BJ (cell line): ENCODE measurements at regions of chr19 and their contacts with region 1.

Region 1: DNA sequence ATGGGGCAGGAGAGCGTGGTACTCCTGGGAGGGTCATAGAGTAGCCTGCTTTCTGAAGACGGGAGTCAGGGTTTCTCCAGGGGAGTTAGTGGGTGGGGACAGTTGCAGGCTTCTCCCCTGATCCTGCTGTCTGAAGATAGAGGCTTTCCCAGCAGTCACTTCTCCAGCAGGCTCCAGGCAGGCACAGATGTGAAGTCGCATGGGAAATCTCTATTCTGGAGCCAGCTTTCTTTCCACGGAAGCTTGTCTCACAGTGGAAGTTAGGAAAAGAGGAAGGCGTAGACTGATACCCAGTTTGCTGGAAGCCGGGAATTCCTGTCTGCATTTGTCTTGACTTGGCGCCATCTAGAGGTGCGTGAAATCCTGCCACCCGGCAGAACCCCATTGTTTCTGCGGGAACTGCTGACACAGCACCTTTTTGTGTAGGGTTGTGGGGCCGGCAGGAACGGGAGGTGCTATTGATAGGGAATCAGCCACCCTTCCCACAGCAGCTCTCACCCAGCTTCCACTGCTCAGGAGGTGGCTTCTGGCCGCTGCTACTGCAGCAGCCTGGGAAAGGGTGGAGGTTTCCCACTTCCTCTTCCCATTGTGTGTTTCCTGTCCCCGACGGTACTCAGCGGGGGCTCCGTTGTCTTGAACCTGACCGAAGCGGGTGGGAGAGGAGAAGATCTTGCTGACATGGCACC is 28.5 kb upstream of the NPAS1 start:
- DNase-seq: no peak
- H3K4me3 ChIP-seq: no peak overlapping the region
- H3K27me3 ChIP-seq: no peaks in the 10 kb centered on the region
- CTCF ChIP-seq: peak; percentile 86

Region 2: GRCh38 chr19:46753420-46754155 is 237.5 kb before region 1 on chr19:
- CTCF ChIA-PET with region 1: interaction called, 12 read pairs
- POLR2A ChIA-PET with region 1: no interaction called
- DNase-seq: no peak
- H3K4me3 ChIP-seq: no peak overlapping the region
- H3K27me3 ChIP-seq: no peaks in the 10 kb centered on the region
- CTCF ChIP-seq: peak; percentile 57

Region 3: DNA sequence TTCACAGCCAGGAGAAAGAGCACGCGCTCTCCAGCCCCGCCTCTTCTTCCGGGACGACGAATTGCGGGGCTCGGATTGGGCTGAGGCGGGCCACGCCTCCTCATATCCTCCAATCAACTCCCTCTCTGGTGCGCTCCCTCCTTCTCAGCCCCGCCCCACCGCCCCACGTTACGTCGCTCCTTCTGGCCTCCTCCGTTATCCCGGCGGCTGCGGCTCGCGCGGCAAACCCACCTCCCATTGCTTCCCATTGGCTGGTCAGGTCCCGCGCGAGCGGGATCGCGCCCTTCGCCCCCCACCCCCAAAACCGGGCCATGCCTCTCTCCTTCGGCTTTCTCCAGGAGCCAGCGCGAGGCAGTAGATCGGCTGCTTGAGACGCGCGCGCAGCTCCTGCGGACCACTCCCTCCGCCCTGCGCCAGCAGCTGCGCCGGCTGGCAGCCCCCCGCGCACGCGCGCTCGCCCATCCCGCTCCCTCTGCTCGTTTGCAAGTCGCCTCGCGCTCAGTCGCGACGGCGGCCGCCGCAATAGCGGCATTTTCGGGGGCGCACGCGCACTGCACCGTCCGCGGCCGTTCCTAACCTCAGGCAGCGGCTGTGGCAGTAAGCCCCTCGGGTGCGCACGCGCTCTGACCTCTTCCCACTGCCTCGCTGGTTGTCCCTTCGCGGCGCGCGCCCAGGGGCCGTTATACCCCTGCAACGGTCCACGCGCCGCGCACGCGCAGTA is 130.8 kb before region 1 on chr19:
- CTCF ChIA-PET with region 1: interaction called, 108 read pairs
- POLR2A ChIA-PET with region 1: no interaction called
- DNase-seq: peak; percentile 91
- H3K4me3 ChIP-seq: peak overlapping the region; percentile 86
- H3K27me3 ChIP-seq: no peaks in the 10 kb centered on the region
- CTCF ChIP-seq: no peak

Region 4: GRCh38 chr19:46925548-46925950 is 65.6 kb before region 1 on chr19:
- CTCF ChIA-PET with region 1: interaction called, 17 read pairs
- POLR2A ChIA-PET with region 1: no interaction called
- DNase-seq: no peak
- H3K4me3 ChIP-seq: no peak overlapping the region
- H3K27me3 ChIP-seq: no peaks in the 10 kb centered on the region
- CTCF ChIP-seq: no peak

Region 5: GRCh38 chr19:46979126-46980105 is 11.7 kb before region 1 on chr19:
- CTCF ChIA-PET with region 1: interaction called, 10 read pairs
- POLR2A ChIA-PET with region 1: no interaction called
- DNase-seq: no peak
- H3K4me3 ChIP-seq: no peak overlapping the region
- H3K27me3 ChIP-seq: no peaks in the 10 kb centered on the region
- CTCF ChIP-seq: no peak

Region 6: DNA sequence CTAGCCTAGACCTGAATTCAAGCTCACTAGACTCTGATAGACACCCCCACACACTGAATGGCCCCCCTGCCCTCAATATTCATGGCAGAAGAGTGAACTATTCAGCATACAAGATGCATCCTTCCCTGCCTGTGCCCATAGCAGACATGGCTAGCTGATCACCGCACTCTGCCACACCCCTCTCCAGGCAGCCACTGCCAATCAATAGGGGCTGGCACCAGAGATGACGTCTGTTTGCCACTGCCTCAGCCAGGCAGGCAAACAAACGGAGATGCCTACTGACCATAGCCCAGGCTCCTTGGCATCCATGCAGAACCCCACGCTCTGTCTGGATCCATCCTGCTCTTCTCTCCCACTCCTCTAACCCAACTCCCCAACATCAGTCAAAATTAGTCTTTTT is 14.7 kb after region 1 on chr19:
- CTCF ChIA-PET with region 1: interaction called, 20 read pairs
- POLR2A ChIA-PET with region 1: no interaction called
- DNase-seq: no peak
- H3K4me3 ChIP-seq: no peak overlapping the region
- H3K27me3 ChIP-seq: no peaks in the 10 kb centered on the region
- CTCF ChIP-seq: no peak

Region 7: GRCh38 chr19:47013041-47013517 is 21.9 kb after region 1 on chr19:
- CTCF ChIA-PET with region 1: interaction called, 19 read pairs
- POLR2A ChIA-PET with region 1: no interaction called
- DNase-seq: no peak
- H3K4me3 ChIP-seq: no peak overlapping the region
- H3K27me3 ChIP-seq: no peaks in the 10 kb centered on the region
- CTCF ChIP-seq: peak; percentile 100